Mucosa of descending colon (tissue), 3 donors: ENCODE measurements at regions of chr17 and their contacts with region 1.

Region 1: DNA sequence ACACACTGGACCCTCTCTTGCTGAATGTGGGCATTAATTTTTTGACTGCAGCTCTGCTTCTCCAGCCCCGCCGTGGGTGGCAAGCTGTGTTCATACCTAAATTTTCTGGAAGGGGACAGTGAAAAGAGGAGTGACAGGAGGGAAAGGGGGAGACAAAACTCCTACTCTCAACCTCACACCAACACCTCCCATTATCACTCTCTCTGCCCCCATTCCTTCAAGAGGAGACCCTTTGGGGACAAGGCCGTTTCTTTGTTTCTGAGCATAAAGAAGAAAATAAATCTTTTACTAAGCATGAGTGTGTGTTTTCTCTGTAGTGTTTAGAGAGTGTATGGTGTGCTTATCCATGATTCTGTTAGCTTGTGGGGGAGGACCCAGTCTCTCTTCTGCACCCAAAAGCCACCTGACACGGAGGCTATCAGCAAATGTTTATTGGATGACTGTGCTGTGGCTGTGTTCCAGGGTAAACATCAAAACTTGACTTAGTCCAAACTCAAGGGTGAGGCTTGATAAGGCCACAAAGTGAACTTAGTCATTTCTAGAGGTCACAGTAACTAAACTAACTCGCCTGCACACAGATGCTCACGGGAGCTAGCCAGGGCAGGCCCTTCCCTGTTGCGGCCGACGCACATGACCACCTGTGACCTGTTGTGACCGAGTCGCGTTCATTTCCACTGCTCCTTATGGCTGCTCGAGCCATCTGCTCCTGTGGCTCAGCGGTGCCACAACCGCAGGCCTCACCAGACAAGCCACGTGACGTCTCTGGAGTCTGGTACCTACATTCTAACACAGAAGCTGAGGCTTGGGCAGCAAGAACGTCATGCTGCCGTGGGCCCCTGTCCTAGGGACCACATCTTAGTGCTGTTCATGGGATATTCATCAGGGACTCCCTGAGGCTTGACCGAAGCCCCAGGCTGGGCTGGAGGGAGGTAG is 9.8 kb upstream of the MED11 start:
- DNase-seq: peak; percentile 74 to 85 (median 85)
- ATAC-seq: peak; percentile 95
- H3K4me3 ChIP-seq: no peak overlapping the region
- H3K4me1 ChIP-seq: peaks cover 15% of the 10 kb centered on the region
- CTCF ChIP-seq: no peak

Region 2: DNA sequence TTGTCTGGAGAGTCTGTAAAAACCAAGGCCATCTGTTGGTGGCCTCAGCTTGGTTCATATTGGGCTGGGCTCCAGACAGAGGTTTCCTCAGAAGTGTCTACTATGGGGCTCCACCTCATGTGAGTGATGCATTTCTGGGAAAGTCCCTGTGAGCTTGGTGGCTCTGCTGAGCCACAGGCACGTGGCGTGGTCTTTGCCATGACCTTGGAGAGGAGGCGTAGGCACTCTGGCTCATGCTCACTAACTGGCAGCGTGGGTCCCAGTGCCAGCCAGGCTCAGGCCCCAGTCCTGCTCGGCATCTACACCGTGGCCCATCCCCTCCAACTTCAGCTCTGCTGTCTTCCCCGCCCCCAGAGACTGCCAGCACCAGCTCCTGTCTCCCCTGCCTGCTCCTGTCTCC is 147.8 kb before region 1 on chr17:
- intact Hi-C with region 1: no loop called
- DNase-seq: peak in 2 of 3 donors; percentile 14 to 27
- ATAC-seq: no peak
- H3K4me3 ChIP-seq: no peak overlapping the region
- H3K4me1 ChIP-seq: no peaks in the 10 kb centered on the region
- CTCF ChIP-seq: no peak

Region 3: DNA sequence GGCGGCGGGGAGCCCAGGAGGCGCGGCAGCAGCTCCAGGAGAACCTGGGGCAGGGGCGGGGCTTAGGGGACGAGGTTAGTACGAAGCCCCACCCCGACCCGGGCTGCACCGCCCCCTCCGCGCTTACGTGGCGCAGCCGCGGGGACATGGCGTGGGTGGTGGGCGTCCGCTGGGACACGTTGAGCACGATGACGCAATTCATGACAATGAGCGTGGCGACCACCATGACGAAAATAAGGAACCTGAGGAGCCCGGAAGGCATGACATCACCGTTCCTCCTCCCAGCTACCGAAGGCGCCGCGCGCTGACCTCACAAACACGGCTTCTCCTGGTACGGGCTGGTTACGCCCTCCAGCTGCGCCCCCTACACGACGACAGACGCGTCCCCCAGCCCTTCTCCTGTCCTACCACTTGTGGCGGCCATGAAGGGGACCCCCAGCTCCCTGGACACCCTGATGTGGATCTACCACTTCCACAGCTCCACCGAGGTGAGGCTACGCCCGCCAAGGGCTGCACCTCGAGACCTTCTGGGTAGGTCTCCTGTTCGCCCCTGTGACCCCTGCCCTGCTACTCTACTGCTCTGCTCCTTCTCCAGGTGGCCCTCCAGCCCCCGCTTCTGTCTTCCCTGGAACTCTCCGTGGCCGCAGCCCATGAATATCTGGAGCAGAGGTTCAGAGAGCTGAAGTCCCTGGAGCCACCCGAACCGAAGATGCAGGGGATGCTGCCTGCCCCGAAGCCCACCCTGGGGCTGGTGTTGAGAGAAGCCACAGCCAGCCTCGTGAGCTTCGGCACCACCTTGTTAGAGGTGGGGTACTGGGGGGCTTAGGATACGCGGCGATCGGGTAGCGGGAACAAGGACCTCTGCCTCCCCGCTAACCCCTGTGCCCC is 178.1 kb after region 1 on chr17 and contains the start of gene C17orf107:
- intact Hi-C with region 1: loop called in 1 of 2 experiments (anchors 10 kb)
- DNase-seq: peak; percentile 89 to 93 (median 90)
- ATAC-seq: peak; percentile 75
- H3K4me3 ChIP-seq: peak within 1 kb of the TSS; percentile 17
- H3K4me1 ChIP-seq: peaks cover 40% of the 10 kb centered on the region
- CTCF ChIP-seq: no peak
- total RNA-seq, gene C17orf107: 0.52 to 2.6 (median 0.80) TPM

Region 4: GRCh38 chr17:4966844-4967538 is 245.5 kb after region 1 on chr17:
- intact Hi-C with region 1: no loop called
- DNase-seq: peak; percentile 96 to 99 (median 96)
- ATAC-seq: peak; percentile 88
- H3K4me3 ChIP-seq: peak overlapping the region; percentile 37
- H3K4me1 ChIP-seq: peaks cover 8% of the 10 kb centered on the region
- CTCF ChIP-seq: no peak